T-cell (primary cell): ENCODE measurements at regions of chr2 and their contacts with region 1.

Region 1: DNA sequence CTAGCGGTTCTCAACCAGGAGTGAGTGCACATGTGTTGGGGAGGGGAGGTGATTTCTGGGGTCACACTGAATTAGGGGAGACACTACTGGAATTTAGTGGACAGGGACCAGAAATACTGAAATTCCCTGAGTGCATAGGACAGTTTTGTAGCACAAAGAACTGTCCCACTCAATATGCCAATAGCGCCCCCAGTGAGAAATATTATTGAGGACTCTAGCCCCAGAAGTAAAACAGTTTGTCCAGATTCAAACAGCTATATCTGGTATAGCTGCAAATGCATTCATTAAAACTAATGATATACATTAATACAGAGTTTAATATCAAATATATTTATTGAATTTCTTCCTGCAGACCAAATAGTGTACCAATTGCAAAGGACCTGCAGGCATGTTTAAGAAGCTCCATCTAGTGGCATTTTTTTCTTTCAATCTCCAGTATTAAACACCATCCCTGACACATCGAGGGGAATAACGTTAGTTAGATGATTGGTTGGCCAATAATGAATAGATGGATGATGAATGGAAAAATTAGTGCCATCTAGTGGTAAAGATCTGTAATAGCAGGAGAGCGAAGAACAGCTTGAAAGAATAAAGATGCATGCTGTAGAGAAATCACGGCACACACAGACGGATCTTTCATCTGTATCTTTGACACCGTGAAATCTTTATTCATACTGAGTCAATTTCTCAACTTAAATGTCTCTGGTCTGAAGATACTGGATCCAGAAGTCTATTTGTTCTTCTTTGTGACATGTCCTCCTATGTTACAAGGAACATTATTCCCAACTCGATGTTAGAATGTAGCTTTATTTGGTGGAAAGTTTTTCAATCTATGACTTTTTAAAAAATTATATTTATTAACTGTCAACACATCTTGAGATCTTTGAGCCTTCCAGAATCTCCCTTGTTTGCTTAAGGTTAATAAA is 62.5 kb downstream of the DHRS9 start:
- DNase-seq: peak in 2 of 35 experiments; percentile 19 to 71
- ATAC-seq: peak; percentile 45 to 81 (median 65)
- H3K4me3 ChIP-seq: no peak overlapping the region
- H3K4me3 Mint-ChIP-seq: no peak overlapping the region
- H3K27ac ChIP-seq: no peak overlapping the region
- H3K27ac Mint-ChIP-seq: no peak overlapping the region
- H3K4me1 ChIP-seq: no peaks in the 10 kb centered on the region
- H3K4me1 Mint-ChIP-seq: peaks cover 0 to 5% (median 4%) of the 10 kb centered on the region in 3 donors
- H3K27me3 ChIP-seq: no peaks in the 10 kb centered on the region
- H3K27me3 Mint-ChIP-seq: no peaks in the 10 kb centered on the region

Region 2: DNA sequence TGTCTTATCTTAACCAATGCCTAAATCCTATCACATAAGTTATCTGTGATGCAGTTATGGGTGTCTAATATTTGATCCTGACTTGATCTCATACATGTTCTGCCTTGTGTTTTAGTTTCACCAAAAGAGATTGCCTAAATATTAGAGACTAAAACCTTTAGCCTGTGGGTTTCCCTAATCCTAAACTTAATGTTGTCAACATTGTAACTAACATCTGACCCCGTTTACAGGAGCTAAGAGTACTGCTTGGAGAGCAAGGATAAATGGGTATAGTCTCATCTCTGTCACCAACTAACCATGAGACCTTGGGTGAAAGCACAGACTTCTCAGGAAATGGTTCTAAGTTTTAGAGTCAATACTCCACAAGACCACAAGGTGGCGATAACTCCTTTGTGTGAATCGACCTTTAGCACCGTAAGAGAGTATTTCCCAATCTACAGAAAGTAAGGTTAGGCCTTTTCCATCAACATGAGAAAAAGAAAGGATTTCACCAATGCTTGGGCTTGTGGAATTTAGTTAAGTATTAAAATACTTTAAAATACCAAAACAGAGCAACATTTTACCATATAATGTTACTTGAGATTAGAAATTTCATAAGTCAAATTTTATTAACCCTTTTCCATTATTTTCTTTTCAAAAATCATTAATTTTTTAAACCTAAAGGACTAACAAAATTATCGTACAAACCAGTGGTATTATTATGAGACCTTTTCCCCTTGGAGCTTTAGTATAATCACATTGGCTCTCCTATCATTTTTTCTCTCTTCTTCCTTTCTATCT is 170.2 kb before region 1 on chr2:
- CTCF ChIA-PET with region 1: interaction called in 1 of 2 experiments, 15 read pairs
- POLR2A ChIA-PET with region 1: no interaction called
- DNase-seq: peak in 18 of 35 experiments; percentile 2 to 79 (median 19)
- ATAC-seq: peak; percentile 68 to 79 (median 76)
- H3K4me3 ChIP-seq: no peak overlapping the region
- H3K4me3 Mint-ChIP-seq: no peak overlapping the region
- H3K27ac ChIP-seq: no peak overlapping the region
- H3K27ac Mint-ChIP-seq: no peak overlapping the region
- H3K4me1 ChIP-seq: peaks cover 5 to 12% of the 10 kb centered on the region in 2 experiments
- H3K4me1 Mint-ChIP-seq: peaks cover 14 to 34% (median 32%) of the 10 kb centered on the region in 3 donors
- H3K27me3 ChIP-seq: no peaks in the 10 kb centered on the region
- H3K27me3 Mint-ChIP-seq: peaks cover 0 to 4% of the 10 kb centered on the region in 2 donors

Region 3: GRCh38 chr2:169109502-169110409 is 22.1 kb before region 1 on chr2:
- CTCF ChIA-PET with region 1: interaction called, 19 to 79 read pairs
- POLR2A ChIA-PET with region 1: interaction called in 1 of 2 experiments, 4 read pairs
- DNase-seq: peak; percentile 17 to 85 (median 63)
- ATAC-seq: peak in 1 of 4 experiments; percentile 37
- H3K4me3 ChIP-seq: no peak overlapping the region
- H3K4me3 Mint-ChIP-seq: no peak overlapping the region
- H3K27ac ChIP-seq: no peak overlapping the region
- H3K27ac Mint-ChIP-seq: no peak overlapping the region
- H3K4me1 ChIP-seq: peaks cover 35 to 36% of the 10 kb centered on the region in 2 experiments
- H3K4me1 Mint-ChIP-seq: peaks cover 45 to 55% (median 45%) of the 10 kb centered on the region in 3 donors
- H3K27me3 ChIP-seq: peaks cover 0 to 5% of the 10 kb centered on the region in 2 experiments
- H3K27me3 Mint-ChIP-seq: peaks cover 0 to 7% of the 10 kb centered on the region in 2 donors

Region 4: GRCh38 chr2:169320561-169320960 is 188.7 kb after region 1 on chr2:
- CTCF ChIA-PET with region 1: no interaction called
- POLR2A ChIA-PET with region 1: no interaction called
- DNase-seq: no peak
- ATAC-seq: no peak
- H3K4me3 ChIP-seq: no peak overlapping the region
- H3K4me3 Mint-ChIP-seq: no peak overlapping the region
- H3K27ac ChIP-seq: no peak overlapping the region
- H3K27ac Mint-ChIP-seq: no peak overlapping the region
- H3K4me1 ChIP-seq: no peaks in the 10 kb centered on the region
- H3K4me1 Mint-ChIP-seq: no peaks in the 10 kb centered on the region
- H3K27me3 ChIP-seq: no peaks in the 10 kb centered on the region
- H3K27me3 Mint-ChIP-seq: peaks cover 7 to 20% of the 10 kb centered on the region in 2 donors